Caco-2 (cell line): ENCODE measurements at regions of chrX and their contacts with region 1.

Region 1: DNA sequence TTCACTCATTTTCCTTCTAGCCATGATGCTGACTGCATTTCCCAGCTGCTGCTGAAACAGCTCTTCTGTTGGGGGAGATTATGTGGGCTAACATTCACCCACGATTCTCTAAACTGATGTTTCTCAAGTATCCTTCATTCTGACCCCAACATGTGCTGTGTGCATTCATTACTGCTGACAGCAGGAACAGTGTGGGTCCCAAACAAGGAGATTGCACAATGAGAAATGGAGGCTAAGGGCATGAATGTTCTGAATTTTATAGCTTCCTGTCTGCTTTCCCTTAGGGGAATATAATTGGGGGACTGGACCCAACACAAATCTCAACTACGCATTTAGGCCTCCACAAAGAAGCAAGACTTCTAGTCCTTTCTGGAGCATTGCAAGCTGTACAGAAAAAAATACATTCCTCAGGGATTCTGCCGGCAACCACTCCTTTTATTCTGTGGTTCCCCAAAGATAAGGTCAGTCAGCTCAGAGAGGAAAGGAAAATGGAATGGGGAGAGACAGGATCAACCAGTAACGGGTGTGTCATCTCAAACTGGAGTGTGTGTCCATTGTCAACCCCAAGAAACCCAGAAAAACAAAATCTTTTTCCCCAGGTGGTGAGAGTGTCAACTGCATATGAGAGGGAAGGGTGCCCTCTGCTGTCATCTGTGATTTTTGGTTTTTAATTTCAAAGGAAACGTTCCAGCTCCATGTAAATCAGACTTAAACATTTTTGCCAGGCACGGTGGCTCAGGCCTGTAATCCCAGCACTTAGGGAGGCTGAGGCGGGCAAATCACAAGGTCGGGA is 81.5 kb upstream of the EGFL6 start:
- DNase-seq: peak; percentile 68 to 75
- H3K4me3 ChIP-seq: no peak overlapping the region
- H3K4me3 Mint-ChIP-seq: peak overlapping the region; percentile 14
- H3K27ac Mint-ChIP-seq: peak overlapping the region; percentile 90
- H3K4me1 ChIP-seq: peaks cover 25% of the 10 kb centered on the region
- H3K4me1 Mint-ChIP-seq: peaks cover 6% of the 10 kb centered on the region
- H3K27me3 ChIP-seq: no peaks in the 10 kb centered on the region
- H3K27me3 Mint-ChIP-seq: no peaks in the 10 kb centered on the region
- CTCF ChIP-seq: peak; percentile 40 to 53

Region 2: DNA sequence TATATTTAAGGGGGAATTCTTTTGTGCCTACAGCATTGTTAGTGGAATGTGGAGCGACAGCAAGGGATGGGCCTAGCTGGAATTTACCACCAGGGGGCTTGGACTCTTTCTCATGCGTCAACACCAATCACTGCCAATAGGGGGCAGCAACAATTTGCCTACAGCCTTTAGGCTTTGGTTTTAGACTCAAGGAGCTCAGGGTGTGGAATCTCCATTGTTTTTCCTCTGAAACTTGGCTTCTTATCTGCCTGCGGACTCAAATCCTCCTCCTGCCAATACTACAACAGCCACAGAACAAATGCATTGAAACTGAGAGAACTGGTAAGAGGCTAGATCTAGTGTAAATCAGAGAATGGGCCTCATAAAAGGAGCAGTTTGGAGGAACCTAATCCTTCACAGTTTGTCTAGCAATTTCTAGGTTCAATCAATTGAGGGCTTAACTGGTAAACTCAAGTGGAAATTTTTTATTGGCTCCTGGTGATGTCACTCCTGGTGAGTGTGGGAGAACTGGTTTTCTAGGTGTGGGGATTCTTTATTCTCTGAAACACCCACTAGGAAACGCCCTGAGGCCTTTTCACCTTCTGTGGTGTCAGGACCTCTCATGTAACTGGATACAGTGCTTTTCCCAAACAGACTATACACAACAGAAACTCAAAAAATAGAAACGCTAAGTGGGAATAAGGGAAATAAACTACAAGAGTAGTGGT is 540.9 kb before region 1 on chrX:
- CTCF ChIA-PET with region 1: interaction called, 30 read pairs
- POLR2A ChIA-PET with region 1: no interaction called
- intact Hi-C with region 1: loop called (anchors 1 kb)
- DNase-seq: peak; percentile 77 to 81
- H3K4me3 ChIP-seq: no peak overlapping the region
- H3K4me3 Mint-ChIP-seq: no peak overlapping the region
- H3K27ac Mint-ChIP-seq: peak overlapping the region; percentile 81
- H3K4me1 ChIP-seq: peaks cover 24% of the 10 kb centered on the region
- H3K4me1 Mint-ChIP-seq: no peaks in the 10 kb centered on the region
- H3K27me3 ChIP-seq: no peaks in the 10 kb centered on the region
- H3K27me3 Mint-ChIP-seq: no peaks in the 10 kb centered on the region
- CTCF ChIP-seq: peak; percentile 83 to 86

Region 3: DNA sequence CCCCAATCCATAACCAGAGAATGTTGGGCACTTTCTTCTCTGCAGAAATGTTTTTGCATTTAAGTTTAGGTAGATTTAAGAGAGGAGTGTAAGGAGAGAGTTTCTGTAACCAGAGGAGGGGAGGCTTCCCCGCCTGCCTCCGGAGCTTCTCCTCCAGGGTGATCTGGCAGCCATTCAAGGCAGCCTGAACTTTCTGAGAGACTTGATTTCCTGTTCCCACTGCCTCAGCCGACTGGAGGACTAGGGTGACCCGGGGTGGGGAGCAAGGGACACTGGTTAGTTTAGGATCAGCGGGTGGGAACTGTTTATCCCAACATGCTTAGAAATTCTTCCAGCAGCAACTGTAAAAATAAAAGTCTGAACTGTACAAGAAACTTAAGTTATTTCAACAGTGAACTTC is 458.6 kb before region 1 on chrX:
- CTCF ChIA-PET with region 1: no interaction called
- POLR2A ChIA-PET with region 1: no interaction called
- intact Hi-C with region 1: loop called (anchors 1 kb)
- DNase-seq: peak in 1 of 2 experiments; percentile 42
- H3K4me3 ChIP-seq: no peak overlapping the region
- H3K4me3 Mint-ChIP-seq: peak overlapping the region; percentile 62
- H3K27ac Mint-ChIP-seq: peak overlapping the region; percentile 96
- H3K4me1 ChIP-seq: peaks cover 58% of the 10 kb centered on the region
- H3K4me1 Mint-ChIP-seq: peaks cover 44% of the 10 kb centered on the region
- H3K27me3 ChIP-seq: no peaks in the 10 kb centered on the region
- H3K27me3 Mint-ChIP-seq: no peaks in the 10 kb centered on the region
- CTCF ChIP-seq: no peak

Region 4: GRCh38 chrX:13051529-13052172 is 436.3 kb before region 1 on chrX:
- CTCF ChIA-PET with region 1: no interaction called
- POLR2A ChIA-PET with region 1: no interaction called
- intact Hi-C with region 1: no loop called
- DNase-seq: no peak
- H3K4me3 ChIP-seq: no peak overlapping the region
- H3K4me3 Mint-ChIP-seq: no peak overlapping the region
- H3K27ac Mint-ChIP-seq: no peak overlapping the region
- H3K4me1 ChIP-seq: no peaks in the 10 kb centered on the region
- H3K4me1 Mint-ChIP-seq: no peaks in the 10 kb centered on the region
- H3K27me3 ChIP-seq: no peaks in the 10 kb centered on the region
- H3K27me3 Mint-ChIP-seq: no peaks in the 10 kb centered on the region
- CTCF ChIP-seq: no peak

Region 5: DNA sequence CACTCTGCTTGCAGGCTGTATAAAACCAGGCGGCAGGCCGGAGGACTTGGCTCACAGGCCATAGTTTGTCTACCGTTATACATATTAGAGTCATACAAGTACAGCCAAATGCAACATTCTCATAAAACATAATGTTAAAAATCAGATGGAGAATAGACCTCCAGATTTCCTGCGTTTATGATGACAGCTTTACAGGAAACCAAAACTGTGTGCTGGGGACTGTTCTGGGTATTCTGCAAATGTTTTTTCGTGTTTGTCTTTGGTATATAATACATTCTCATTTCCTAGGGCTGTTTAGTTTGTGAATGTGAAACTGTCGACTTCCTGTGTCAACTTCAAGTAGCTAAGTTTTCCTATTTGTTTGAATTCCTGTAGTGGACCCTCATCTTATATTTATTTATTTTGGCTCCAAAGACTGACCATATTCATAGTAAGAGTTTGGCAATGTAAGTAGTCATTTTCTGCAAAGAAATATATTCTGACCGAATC is 364.0 kb before region 1 on chrX:
- CTCF ChIA-PET with region 1: no interaction called
- POLR2A ChIA-PET with region 1: no interaction called
- intact Hi-C with region 1: loop called (anchors 5 kb)
- DNase-seq: no peak
- H3K4me3 ChIP-seq: no peak overlapping the region
- H3K4me3 Mint-ChIP-seq: no peak overlapping the region
- H3K27ac Mint-ChIP-seq: no peak overlapping the region
- H3K4me1 ChIP-seq: no peaks in the 10 kb centered on the region
- H3K4me1 Mint-ChIP-seq: no peaks in the 10 kb centered on the region
- H3K27me3 ChIP-seq: no peaks in the 10 kb centered on the region
- H3K27me3 Mint-ChIP-seq: no peaks in the 10 kb centered on the region
- CTCF ChIP-seq: no peak

Region 6: DNA sequence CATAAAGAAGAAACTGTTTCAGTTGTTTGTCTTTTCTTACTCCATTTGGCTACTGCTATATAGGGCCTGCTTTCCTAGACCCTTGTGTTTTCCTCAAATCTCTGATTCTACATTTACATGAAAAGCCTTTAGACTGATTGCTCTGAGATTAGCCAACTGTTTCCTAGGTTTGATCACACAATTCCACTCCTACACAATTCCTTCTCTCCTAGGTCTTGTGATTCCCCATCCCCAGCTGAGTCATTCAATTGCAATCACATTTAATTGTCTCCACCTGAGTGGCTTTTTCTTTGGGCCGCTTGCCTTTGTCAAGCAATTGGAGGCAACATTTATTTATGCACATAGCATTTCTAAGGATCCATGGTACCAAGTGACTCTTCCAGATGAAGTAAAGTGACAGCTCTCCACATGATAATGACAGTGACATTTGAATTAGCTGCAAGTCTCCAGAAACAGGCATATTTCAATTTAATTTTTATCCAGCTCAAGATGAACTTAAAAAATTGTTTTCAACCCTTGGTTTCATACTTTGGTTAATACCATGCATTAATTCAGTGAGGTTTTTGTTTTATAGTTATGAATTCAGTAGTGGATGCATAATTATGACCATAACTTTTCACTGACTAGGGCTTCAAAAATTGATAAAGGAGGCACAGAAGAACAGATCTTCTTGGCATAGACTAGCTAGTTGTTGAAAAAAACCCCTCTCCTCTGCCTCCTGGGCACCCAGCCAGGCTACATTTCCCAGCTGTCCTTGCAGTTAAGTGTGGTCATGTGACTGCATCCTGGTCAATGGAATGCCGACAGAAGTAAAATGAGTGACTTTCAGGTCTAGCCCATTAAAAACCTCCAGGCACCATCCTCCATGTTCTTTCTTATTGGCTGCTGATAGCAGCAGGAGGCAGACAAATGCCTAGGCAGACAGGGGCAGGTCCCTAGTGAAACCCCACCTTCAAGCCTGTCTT is 203.7 kb before region 1 on chrX:
- CTCF ChIA-PET with region 1: no interaction called
- POLR2A ChIA-PET with region 1: no interaction called
- intact Hi-C with region 1: loop called (anchors 5 kb)
- DNase-seq: no peak
- H3K4me3 ChIP-seq: no peak overlapping the region
- H3K4me3 Mint-ChIP-seq: no peak overlapping the region
- H3K27ac Mint-ChIP-seq: no peak overlapping the region
- H3K4me1 ChIP-seq: peaks cover 27% of the 10 kb centered on the region
- H3K4me1 Mint-ChIP-seq: peaks cover 9% of the 10 kb centered on the region
- H3K27me3 ChIP-seq: no peaks in the 10 kb centered on the region
- H3K27me3 Mint-ChIP-seq: no peaks in the 10 kb centered on the region
- CTCF ChIP-seq: no peak

Region 7: DNA sequence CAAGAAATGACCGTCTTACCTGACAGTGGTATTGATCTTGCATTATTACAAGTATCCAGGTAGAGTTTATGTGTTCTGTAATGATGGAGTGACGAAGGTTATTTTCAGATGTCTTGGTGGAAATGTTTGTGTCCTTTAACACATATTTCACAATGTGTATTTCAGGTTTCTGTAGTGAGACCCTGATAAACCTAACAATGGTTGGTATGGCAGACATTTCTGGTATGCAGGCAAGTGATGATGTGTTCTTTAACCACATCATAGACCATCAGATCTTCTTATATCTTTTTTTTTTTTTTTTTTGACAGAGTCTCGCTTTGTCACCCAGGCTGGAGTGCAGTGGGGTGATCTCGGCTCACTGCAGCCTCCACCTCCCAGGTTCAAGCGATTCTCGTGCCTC is 153.4 kb before region 1 on chrX:
- CTCF ChIA-PET with region 1: no interaction called
- POLR2A ChIA-PET with region 1: no interaction called
- intact Hi-C with region 1: loop called (anchors 10 kb)
- DNase-seq: peak in 1 of 2 experiments; percentile 5
- H3K4me3 ChIP-seq: no peak overlapping the region
- H3K4me3 Mint-ChIP-seq: no peak overlapping the region
- H3K27ac Mint-ChIP-seq: peak overlapping the region; percentile 45
- H3K4me1 ChIP-seq: peaks cover 11% of the 10 kb centered on the region; the same call in 1 of the 2 replicates
- H3K4me1 Mint-ChIP-seq: no peaks in the 10 kb centered on the region
- H3K27me3 ChIP-seq: no peaks in the 10 kb centered on the region
- H3K27me3 Mint-ChIP-seq: no peaks in the 10 kb centered on the region
- CTCF ChIP-seq: no peak

Region 8: DNA sequence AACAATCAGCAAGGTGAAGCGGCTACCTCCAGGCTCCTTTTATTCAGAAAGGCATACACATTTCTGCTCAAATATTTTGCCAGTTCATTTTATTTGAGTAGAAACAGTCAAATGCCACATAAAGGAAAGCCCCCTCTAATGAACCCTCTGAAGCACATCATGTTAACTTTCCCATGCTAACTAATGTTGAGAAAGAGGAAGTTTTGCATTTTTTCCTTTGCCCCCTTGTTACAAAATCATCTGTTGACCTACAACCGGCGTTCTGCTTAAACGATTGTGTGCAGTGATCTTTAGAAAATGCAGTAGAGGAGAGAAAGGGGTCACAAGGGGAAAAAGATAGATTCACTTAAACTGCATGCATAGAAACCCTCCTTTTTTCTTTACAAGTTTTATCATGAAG is 142.9 kb before region 1 on chrX:
- CTCF ChIA-PET with region 1: no interaction called
- POLR2A ChIA-PET with region 1: no interaction called
- intact Hi-C with region 1: no loop called
- DNase-seq: no peak
- H3K4me3 ChIP-seq: no peak overlapping the region
- H3K4me3 Mint-ChIP-seq: no peak overlapping the region
- H3K27ac Mint-ChIP-seq: no peak overlapping the region
- H3K4me1 ChIP-seq: no peaks in the 10 kb centered on the region
- H3K4me1 Mint-ChIP-seq: no peaks in the 10 kb centered on the region
- H3K27me3 ChIP-seq: no peaks in the 10 kb centered on the region
- H3K27me3 Mint-ChIP-seq: no peaks in the 10 kb centered on the region
- CTCF ChIP-seq: no peak

Region 9: GRCh38 chrX:13398073-13398823 is 89.7 kb before region 1 on chrX:
- CTCF ChIA-PET with region 1: no interaction called
- POLR2A ChIA-PET with region 1: no interaction called
- intact Hi-C with region 1: loop called (anchors 1 kb)
- DNase-seq: peak; percentile 84 to 91
- H3K4me3 ChIP-seq: no peak overlapping the region
- H3K4me3 Mint-ChIP-seq: peak overlapping the region; percentile 40
- H3K27ac Mint-ChIP-seq: peak overlapping the region; percentile 83
- H3K4me1 ChIP-seq: peaks cover 20% of the 10 kb centered on the region
- H3K4me1 Mint-ChIP-seq: peaks cover 18% of the 10 kb centered on the region
- H3K27me3 ChIP-seq: no peaks in the 10 kb centered on the region
- H3K27me3 Mint-ChIP-seq: no peaks in the 10 kb centered on the region
- CTCF ChIP-seq: no peak